CD4-positive, alpha-beta T cell (primary cell): ENCODE measurements at regions of chrX and their contacts with region 1.

Region 1: GRCh38 chrX:30652527-30653414 is 452 bp upstream of the GK start:
- DNase-seq: peak; percentile 72 to 93 (median 86)
- ATAC-seq: peak; percentile 84
- H3K4me3 ChIP-seq: peak overlapping the region; percentile 89
- H3K4me3 Mint-ChIP-seq: peak overlapping the region; percentile 96
- H3K27ac ChIP-seq: peak overlapping the region; percentile 56 to 69
- H3K27ac Mint-ChIP-seq: peak overlapping the region; percentile 96
- H3K4me1 ChIP-seq: peaks cover 20% of the 10 kb centered on the region
- H3K4me1 Mint-ChIP-seq: peaks cover 45% of the 10 kb centered on the region
- H3K27me3 ChIP-seq: no peaks in the 10 kb centered on the region
- H3K27me3 Mint-ChIP-seq: no peaks in the 10 kb centered on the region
- CTCF ChIP-seq: no peak

Region 2: GRCh38 chrX:30577362-30577991 is 75.3 kb before region 1 on chrX and contains the start of gene TASL:
- CTCF ChIA-PET with region 1: no interaction called
- POLR2A ChIA-PET with region 1: no interaction called
- intact Hi-C with region 1: loop called in 1 of 2 experiments (anchors 1 kb)
- DNase-seq: peak in 7 of 14 experiments; percentile 1 to 73 (median 33)
- ATAC-seq: peak; percentile 76
- H3K4me3 ChIP-seq: peak within 1 kb of the TSS; percentile 59
- H3K4me3 Mint-ChIP-seq: peak within 1 kb of the TSS; percentile 95
- H3K27ac ChIP-seq: peak within 1 kb of the TSS in 1 of 2 donors; percentile 66
- H3K27ac Mint-ChIP-seq: peak within 1 kb of the TSS; percentile 91
- H3K4me1 ChIP-seq: peaks cover 4% of the 10 kb centered on the region
- H3K4me1 Mint-ChIP-seq: peaks cover 27% of the 10 kb centered on the region
- H3K27me3 ChIP-seq: no peaks in the 10 kb centered on the region
- H3K27me3 Mint-ChIP-seq: no peaks in the 10 kb centered on the region
- CTCF ChIP-seq: no peak
- total RNA-seq, gene TASL: 0.41 to 0.75 TPM